Naive thymus-derived CD8-positive, alpha-beta T cell (primary cell): ENCODE measurements at regions of chr17 and their contacts with region 1.

Region 1: GRCh38 chr17:39653662-39654331 is 11.4 kb upstream of the TCAP start:
- DNase-seq: peak; percentile 56 to 88 (median 76)
- ATAC-seq: peak; percentile 50 to 62
- H3K4me3 Mint-ChIP-seq: peak overlapping the region in 2 of 10 donors; percentile 15 to 18
- H3K27ac Mint-ChIP-seq: peak overlapping the region in 7 of 10 donors; percentile 23 to 82 (median 61)
- H3K4me1 Mint-ChIP-seq: peaks cover 39 to 79% (median 69%) of the 10 kb centered on the region in 4 donors
- H3K27me3 Mint-ChIP-seq: no peaks in the 10 kb centered on the region

Region 2: DNA sequence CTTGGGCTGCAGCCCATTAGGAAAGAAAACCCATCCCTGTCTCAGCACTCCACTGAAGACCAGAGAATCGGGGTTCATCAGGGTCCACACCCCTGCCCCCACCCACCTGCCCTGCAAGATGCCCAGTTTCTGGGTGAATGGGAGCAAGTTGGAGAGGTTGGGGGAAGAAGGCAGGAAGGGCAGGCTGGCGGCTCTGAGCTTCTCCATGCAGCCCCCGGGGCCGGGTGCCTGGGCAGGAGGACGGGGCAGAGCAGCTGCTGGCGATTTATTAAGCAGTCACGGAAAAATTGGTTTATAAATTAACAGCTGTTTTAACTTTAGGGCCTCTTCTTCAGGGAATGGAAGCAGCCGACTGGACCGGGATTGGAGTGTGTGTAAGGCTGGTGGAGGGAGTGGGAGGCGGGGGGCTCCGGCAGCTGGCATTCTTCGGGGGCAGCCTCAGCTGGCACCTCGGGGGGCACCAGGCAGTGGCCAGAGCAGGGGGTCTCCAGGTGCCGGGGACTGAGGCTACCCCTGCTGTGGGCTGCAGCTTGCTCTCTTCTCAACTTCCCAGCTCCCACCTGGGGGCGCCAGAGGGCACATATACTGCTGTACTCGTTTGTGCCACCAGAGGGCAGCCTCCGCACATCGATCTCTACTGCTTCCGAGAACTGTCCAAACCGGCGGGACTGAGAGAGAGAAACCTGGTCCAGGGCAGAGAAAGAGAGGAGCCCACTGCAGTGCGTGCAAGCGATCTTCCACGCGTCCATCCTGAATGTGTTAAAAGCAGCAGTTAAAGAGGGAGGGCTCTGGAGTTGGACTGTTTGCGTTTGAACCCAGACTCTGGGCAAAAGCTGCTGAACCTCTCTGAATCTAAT is 32.0 kb before region 1 on chr17:
- POLR2A ChIA-PET with region 1: interaction called, 11 read pairs
- DNase-seq: peak; percentile 75 to 98 (median 87)
- ATAC-seq: peak; percentile 54 to 67
- H3K4me3 Mint-ChIP-seq: peak overlapping the region; percentile 26 to 82 (median 51)
- H3K27ac Mint-ChIP-seq: peak overlapping the region in 9 of 10 donors; percentile 5 to 75 (median 57)
- H3K4me1 Mint-ChIP-seq: peaks cover 15 to 41% (median 29%) of the 10 kb centered on the region in 4 donors
- H3K27me3 Mint-ChIP-seq: peaks cover 8 to 25% (median 18%) of the 10 kb centered on the region in 5 donors

Region 3: GRCh38 chr17:39668199-39668966 is 14.6 kb after region 1 on chr17 and contains the start of gene PNMT:
- POLR2A ChIA-PET with region 1: interaction called, 22 read pairs
- DNase-seq: peak; percentile 45 to 84 (median 66)
- ATAC-seq: peak; percentile 76 to 80
- H3K4me3 Mint-ChIP-seq: peak within 1 kb of the TSS; percentile 62 to 87 (median 74)
- H3K27ac Mint-ChIP-seq: peak within 1 kb of the TSS in 6 of 10 donors; percentile 61 to 92 (median 74)
- H3K4me1 Mint-ChIP-seq: peaks cover 15 to 43% (median 32%) of the 10 kb centered on the region in 4 donors
- H3K27me3 Mint-ChIP-seq: peaks cover 0 to 16% (median 4%) of the 10 kb centered on the region in 5 donors
- polyA plus RNA-seq, gene PNMT: 0.43 to 0.64 TPM in 2 of 3 donors, not detected in the other

Region 4: DNA sequence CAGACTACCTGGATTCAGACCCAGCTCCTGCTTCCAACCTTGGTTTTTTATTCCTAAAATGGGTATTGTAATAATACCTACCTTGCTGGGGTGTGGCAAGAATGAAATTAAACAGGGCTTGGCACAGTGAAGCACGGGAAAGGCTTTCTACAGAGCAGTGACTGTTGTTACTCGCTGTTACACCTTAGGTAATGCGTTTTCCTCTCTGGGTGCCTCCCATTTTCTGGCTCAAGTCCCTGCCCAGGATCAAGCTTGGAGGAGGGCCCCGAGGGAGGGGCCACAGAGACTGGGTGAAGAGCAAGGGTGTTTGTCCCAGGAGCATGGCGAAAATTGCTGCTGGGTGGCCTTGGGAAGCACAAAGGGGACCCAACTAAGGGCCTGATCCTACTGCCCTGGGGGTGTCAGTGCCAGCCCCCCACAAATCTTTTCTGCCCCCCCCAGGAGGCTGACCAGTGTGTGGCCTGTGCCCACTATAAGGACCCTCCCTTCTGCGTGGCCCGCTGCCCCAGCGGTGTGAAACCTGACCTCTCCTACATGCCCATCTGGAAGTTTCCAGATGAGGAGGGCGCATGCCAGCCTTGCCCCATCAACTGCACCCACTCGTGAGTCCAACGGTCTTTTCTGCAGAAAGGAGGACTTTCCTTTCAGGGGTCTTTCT is 63.2 kb after region 1 on chr17:
- POLR2A ChIA-PET with region 1: no interaction called
- DNase-seq: no peak
- ATAC-seq: no peak
- H3K4me3 Mint-ChIP-seq: no peak overlapping the region
- H3K27ac Mint-ChIP-seq: no peak overlapping the region
- H3K4me1 Mint-ChIP-seq: peaks cover 0 to 5% (median 0%) of the 10 kb centered on the region in 4 donors
- H3K27me3 Mint-ChIP-seq: no peaks in the 10 kb centered on the region